MCF 10A (cell line): ENCODE measurements at regions of chr3 and their contacts with region 1.

Region 1: GRCh38 chr3:64484289-64484992 is 203.4 kb downstream of the ADAMTS9 start:
- DNase-seq: peak; percentile 81
- H3K4me3 Mint-ChIP-seq: no peak overlapping the region
- H3K27ac Mint-ChIP-seq: no peak overlapping the region
- H3K4me1 Mint-ChIP-seq: no peaks in the 10 kb centered on the region
- H3K27me3 Mint-ChIP-seq: peaks cover 11% of the 10 kb centered on the region
- CTCF ChIP-seq: peak; percentile 94

Region 2: DNA sequence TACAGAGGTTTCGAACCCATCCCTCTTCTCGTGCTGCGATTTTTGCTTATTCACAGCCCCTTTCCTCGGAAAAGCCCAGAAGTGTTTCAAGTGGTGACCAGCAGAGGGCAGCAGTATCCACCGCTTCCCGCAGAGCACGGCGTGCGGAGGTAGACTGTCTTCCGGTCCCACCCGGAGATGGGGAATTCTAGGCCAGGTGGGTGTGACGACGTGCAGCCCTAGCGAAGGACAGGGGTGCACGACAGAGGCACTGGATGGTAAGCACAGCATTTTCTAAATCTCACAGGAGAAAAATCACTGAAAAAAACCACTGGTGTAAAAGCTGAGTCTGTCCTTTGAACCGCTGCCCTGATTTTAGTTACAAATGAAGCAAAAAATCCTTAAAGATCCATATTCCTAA is 453.7 kb before region 1 on chr3:
- CTCF ChIA-PET with region 1: interaction called, 130 read pairs
- POLR2A ChIA-PET with region 1: no interaction called
- intact Hi-C with region 1: loop called (anchors 1 kb)
- DNase-seq: peak; percentile 75
- H3K4me3 Mint-ChIP-seq: peak overlapping the region; percentile 65
- H3K27ac Mint-ChIP-seq: no peak overlapping the region
- H3K4me1 Mint-ChIP-seq: peaks cover 8% of the 10 kb centered on the region
- H3K27me3 Mint-ChIP-seq: peaks cover 30% of the 10 kb centered on the region
- CTCF ChIP-seq: peak; percentile 86

Region 3: DNA sequence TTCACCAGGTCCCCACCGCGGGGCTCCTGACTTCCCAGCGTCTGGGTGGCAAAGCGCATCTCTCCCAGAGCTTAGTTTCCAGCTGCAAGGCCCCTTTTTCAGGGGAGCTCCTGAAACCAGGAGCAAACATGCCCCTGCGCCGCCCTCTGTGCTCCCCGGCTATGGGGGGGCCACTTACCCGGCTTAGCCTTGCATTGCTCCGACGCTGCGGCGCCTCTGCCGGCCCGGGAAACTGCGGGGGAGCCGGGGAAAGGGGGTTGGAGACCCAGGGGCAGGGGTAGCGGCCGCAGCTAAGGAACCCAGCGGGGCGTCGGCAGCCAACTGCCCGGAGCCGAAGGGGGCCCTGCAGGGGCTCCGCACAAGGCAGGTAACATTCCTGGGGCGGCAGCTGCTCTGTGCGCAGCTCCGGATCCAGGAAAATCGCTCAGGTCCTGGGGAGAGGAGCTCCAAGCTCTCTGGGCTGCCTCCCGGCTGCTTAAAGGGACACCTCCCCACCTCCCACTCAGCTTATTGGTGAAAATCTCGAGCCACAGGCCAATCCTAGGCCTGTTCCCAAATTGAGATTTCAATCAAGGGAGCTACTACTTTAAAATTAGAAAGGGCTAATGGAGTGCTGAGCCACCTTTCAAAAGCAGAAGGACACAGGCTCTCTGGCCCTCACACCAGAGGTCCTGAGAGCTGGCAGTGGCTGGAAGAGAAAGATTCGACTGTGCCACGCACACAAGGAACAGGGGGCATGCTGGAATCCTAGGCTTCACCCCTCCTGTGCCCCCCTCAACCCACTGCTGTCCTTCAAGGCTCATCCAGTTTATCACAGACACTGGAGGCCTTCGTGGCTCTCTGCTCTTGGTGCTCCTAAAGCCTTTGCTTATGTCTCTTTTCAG is 216.5 kb before region 1 on chr3:
- CTCF ChIA-PET with region 1: interaction called, 9 read pairs
- POLR2A ChIA-PET with region 1: no interaction called
- intact Hi-C with region 1: loop called (anchors 5 kb)
- DNase-seq: peak; percentile 75
- H3K4me3 Mint-ChIP-seq: peak overlapping the region; percentile 86
- H3K27ac Mint-ChIP-seq: peak overlapping the region; percentile 90
- H3K4me1 Mint-ChIP-seq: peaks cover 30% of the 10 kb centered on the region
- H3K27me3 Mint-ChIP-seq: no peaks in the 10 kb centered on the region
- CTCF ChIP-seq: no peak

Region 4: DNA sequence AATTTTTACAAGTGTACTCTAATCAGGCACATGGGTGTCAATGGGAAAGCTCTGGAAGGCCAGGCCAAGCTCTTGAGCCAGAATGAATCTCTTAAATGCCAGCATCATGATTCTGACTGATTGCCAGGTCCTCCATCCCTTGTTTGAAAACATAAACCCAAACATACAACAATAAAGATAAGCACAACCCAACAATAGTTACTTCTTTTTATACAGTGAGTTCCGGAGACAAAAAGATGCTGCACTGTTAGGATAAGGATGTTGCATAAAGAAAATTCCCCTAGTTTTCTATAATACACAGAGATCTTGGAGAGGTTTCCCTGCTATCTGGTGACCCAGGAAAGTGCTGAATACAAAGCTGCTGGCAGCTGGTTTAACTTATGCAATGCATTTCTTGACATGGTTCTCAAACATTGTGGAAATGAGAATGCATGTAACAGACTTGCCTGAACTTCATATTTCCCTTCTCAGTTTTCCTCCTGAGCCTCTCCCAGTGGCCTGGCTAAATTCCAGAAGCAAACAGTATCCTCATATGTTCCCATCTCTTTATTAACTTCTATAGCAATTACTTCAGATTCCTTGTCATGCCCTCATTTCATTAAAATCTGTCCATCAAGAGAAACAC is 79.1 kb before region 1 on chr3:
- CTCF ChIA-PET with region 1: interaction called, 36 read pairs
- POLR2A ChIA-PET with region 1: no interaction called
- intact Hi-C with region 1: no loop called
- DNase-seq: no peak
- H3K4me3 Mint-ChIP-seq: no peak overlapping the region
- H3K27ac Mint-ChIP-seq: no peak overlapping the region
- H3K4me1 Mint-ChIP-seq: peaks cover 6% of the 10 kb centered on the region
- H3K27me3 Mint-ChIP-seq: no peaks in the 10 kb centered on the region
- CTCF ChIP-seq: no peak

Region 5: DNA sequence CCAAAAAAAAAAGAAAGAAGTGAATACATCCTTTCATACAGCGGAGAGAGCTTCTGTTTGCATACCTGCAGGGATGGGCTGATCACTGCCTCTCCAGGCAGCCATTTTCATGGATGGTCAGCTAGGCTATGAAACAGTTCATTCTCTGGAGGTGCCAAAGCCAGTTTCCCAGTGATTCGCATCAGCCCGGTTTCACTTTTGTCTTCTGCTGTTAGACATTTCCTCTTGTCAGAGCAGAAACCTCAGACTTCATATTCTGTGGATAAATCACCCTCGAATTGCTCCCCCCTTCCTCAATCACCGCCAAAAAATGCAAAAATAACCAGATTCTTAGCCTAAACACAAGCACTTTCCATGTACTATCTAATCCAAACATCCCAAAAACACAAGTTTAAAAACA is 22.2 kb before region 1 on chr3:
- CTCF ChIA-PET with region 1: interaction called, 31 read pairs
- POLR2A ChIA-PET with region 1: no interaction called
- intact Hi-C with region 1: no loop called
- DNase-seq: no peak
- H3K4me3 Mint-ChIP-seq: no peak overlapping the region
- H3K27ac Mint-ChIP-seq: no peak overlapping the region
- H3K4me1 Mint-ChIP-seq: no peaks in the 10 kb centered on the region
- H3K27me3 Mint-ChIP-seq: peaks cover 13% of the 10 kb centered on the region
- CTCF ChIP-seq: no peak

Region 6: GRCh38 chr3:64575211-64575844 is 90.9 kb after region 1 on chr3:
- CTCF ChIA-PET with region 1: no interaction called
- POLR2A ChIA-PET with region 1: no interaction called
- intact Hi-C with region 1: no loop called
- DNase-seq: peak; percentile 48
- H3K4me3 Mint-ChIP-seq: no peak overlapping the region
- H3K27ac Mint-ChIP-seq: no peak overlapping the region
- H3K4me1 Mint-ChIP-seq: peaks cover 9% of the 10 kb centered on the region
- H3K27me3 Mint-ChIP-seq: no peaks in the 10 kb centered on the region
- CTCF ChIP-seq: peak; percentile 50

Region 7: DNA sequence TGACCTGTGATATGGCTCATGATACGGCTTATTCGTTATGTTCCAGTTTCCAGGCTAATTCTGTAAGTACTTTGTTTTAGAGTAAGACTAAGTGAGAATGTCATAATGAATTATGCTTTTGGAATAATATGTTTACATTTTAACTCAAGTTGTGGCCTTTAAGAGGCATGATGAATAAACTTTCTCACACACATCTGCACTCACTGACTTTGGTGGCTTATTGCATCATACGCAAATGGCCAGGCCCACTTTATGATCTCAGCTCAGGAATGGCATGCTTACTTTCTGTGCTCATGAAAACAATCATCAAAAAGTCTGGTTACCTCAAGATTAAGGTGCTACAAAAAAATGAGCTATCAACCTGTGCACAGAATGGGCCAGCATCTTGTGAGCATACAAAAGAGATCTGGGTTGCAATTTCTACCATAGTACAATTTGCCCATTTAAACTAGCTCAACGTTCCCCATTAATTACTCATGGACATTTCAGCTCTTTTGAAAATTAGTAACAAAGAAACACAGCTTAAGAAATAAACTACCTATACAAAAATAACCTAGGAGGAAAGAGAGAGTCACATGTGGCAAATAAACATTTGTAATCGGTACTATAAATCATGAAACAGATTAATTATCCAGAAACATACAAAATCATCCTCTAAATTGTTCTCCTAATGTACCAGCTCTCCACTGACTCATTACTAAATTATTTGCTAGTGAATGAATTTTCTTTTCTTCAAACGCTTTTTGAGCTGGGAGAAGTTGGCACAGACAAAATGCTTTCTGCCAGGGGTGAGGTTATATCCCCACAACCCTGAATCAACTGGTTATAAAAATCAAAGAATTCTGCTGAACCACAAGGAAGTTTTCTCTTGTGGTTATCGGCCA is 642.3 kb after region 1 on chr3:
- CTCF ChIA-PET with region 1: no interaction called
- POLR2A ChIA-PET with region 1: no interaction called
- intact Hi-C with region 1: no loop called
- DNase-seq: peak; percentile 63
- H3K4me3 Mint-ChIP-seq: peak overlapping the region; percentile 17
- H3K27ac Mint-ChIP-seq: peak overlapping the region; percentile 49
- H3K4me1 Mint-ChIP-seq: peaks cover 19% of the 10 kb centered on the region
- H3K27me3 Mint-ChIP-seq: no peaks in the 10 kb centered on the region
- CTCF ChIP-seq: no peak